Caco-2 (cell line): ENCODE measurements at regions of chr2 and their contacts with region 1.

Region 1: DNA sequence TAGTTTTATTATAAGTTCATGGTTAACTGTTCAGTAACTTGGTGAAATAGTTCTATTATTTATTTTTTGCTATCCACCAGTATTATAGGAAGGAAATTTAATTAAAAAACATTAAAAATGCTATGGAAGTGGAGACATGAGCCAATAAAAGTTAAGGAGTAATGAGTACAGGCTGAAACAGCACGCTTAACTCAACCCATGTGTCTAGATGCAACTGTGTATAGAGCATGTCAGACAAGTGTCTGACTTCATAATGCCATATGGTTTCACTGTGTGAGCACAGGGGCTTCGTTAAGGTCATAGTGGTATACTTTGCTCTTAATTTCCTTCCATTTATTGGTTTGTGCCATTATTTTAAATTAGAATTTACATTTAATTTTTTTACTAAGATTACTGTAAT is 566.8 kb upstream of the NRP2 start:
- DNase-seq: no peak
- H3K4me3 ChIP-seq: no peak overlapping the region
- H3K4me3 Mint-ChIP-seq: no peak overlapping the region
- H3K27ac Mint-ChIP-seq: no peak overlapping the region
- H3K4me1 ChIP-seq: no peaks in the 10 kb centered on the region
- H3K4me1 Mint-ChIP-seq: peaks cover 2% of the 10 kb centered on the region
- H3K27me3 ChIP-seq: no peaks in the 10 kb centered on the region
- H3K27me3 Mint-ChIP-seq: no peaks in the 10 kb centered on the region
- CTCF ChIP-seq: no peak

Region 2: DNA sequence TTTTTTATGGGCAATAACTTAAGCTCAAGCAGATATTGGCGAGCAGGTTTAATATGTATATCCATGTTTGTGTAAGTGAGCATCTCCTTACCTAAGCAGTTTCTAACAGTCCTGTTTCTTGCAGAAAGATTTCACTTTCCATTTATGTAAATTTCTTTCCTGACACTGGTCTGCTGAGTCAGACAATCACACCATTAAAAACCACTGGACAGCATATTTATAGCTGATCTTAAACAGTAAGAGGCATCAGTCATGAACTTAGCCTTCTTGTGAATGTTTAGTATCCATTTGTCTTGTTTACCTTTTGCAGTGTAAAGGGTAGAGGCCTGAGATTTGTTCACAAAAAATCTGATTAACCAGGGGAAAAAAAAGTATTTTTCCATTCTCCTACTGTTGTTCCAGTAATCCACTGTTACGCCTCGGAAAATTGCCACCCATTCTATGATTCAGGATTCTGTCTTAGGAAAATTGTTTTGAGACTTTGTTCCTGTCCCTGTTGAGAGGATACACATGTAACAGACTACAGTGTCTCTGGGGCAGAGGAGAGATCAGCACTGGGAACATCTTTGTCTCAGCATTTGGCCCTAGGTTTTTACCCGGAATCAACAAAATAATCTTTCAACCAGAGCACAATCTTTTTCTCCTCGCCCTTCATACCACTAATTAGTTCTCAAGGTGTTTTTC is 45.8 kb after region 1 on chr2:
- CTCF ChIA-PET with region 1: no interaction called
- POLR2A ChIA-PET with region 1: interaction called, 14 read pairs
- intact Hi-C with region 1: no loop called
- DNase-seq: no peak
- H3K4me3 ChIP-seq: no peak overlapping the region
- H3K4me3 Mint-ChIP-seq: no peak overlapping the region
- H3K27ac Mint-ChIP-seq: no peak overlapping the region
- H3K4me1 ChIP-seq: no peaks in the 10 kb centered on the region
- H3K4me1 Mint-ChIP-seq: no peaks in the 10 kb centered on the region
- H3K27me3 ChIP-seq: no peaks in the 10 kb centered on the region
- H3K27me3 Mint-ChIP-seq: no peaks in the 10 kb centered on the region
- CTCF ChIP-seq: no peak